Heart right ventricle (tissue), 16 donors: ENCODE measurements at regions of chrX and their contacts with region 1.

Region 1: GRCh38 chrX:150772150-150772970 is 79.2 kb downstream of the MTMR1 start:
- DNase-seq: peak; percentile 59 to 82
- ATAC-seq: peak; percentile 80 to 93 (median 88)
- H3K4me3 ChIP-seq: no peak overlapping the region
- H3K27ac ChIP-seq: no peak overlapping the region
- H3K4me1 ChIP-seq: peaks cover 0 to 8% (median 3%) of the 10 kb centered on the region in 9 donors
- H3K27me3 ChIP-seq: no peaks in the 10 kb centered on the region
- CTCF ChIP-seq: peak; percentile 60 to 81 (median 76)

Region 2: GRCh38 chrX:150898343-150899190 is 126.2 kb after region 1 on chrX and contains the start of gene CD99L2:
- intact Hi-C with region 1: loop called in 2 of 10 experiments (anchors 2 to 10 kb)
- DNase-seq: peak; percentile 87 to 91
- ATAC-seq: peak; percentile 96 to 99 (median 98)
- H3K4me3 ChIP-seq: peak within 1 kb of the TSS; percentile 38 to 73 (median 66)
- H3K27ac ChIP-seq: peak within 1 kb of the TSS; percentile 40 to 89 (median 82)
- H3K4me1 ChIP-seq: peaks cover 0 to 12% (median 0%) of the 10 kb centered on the region in 9 donors
- H3K27me3 ChIP-seq: no peaks in the 10 kb centered on the region
- CTCF ChIP-seq: no peak
- total RNA-seq, gene CD99L2: 67.2 to 122 (median 80.8) TPM

Region 3: GRCh38 chrX:150982788-150983520 is 210.6 kb after region 1 on chrX and contains the start of gene HMGB3:
- intact Hi-C with region 1: loop called in 5 of 10 experiments (anchors 5 to 10 kb)
- DNase-seq: peak; percentile 68 to 78
- ATAC-seq: peak; percentile 93 to 99 (median 98)
- H3K4me3 ChIP-seq: peak within 1 kb of the TSS in 9 of 10 donors; percentile 34 to 60 (median 55)
- H3K27ac ChIP-seq: peak within 1 kb of the TSS in 1 of 10 donors; percentile 61
- H3K4me1 ChIP-seq: peaks cover 0 to 6% (median 0%) of the 10 kb centered on the region in 9 donors
- H3K27me3 ChIP-seq: no peaks in the 10 kb centered on the region
- CTCF ChIP-seq: no peak
- total RNA-seq, gene HMGB3: 5.1 to 16.4 (median 13.8) TPM

Region 4: DNA sequence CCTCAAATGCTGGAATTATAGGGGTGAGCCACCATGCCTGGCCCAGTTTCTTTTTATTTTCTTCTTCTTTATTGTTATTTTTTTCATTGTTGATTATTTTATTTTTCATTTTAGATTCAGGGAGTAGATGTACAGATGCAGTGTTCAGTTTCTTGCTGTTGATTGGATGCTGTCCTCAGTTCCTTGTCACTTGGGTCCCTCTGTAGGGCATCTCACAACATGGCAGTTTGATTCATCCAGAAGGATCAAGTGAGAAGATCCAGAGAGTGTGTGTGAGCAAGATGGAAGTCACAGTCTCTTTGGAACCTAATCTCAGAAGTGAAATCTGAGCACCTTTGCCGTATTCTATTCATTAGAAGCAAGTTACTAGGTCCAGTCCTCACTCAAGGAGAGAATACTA is 231.7 kb after region 1 on chrX:
- intact Hi-C with region 1: loop called in 2 of 10 experiments (anchors 5 to 10 kb)
- DNase-seq: no peak
- ATAC-seq: no peak
- H3K4me3 ChIP-seq: no peak overlapping the region
- H3K27ac ChIP-seq: no peak overlapping the region
- H3K4me1 ChIP-seq: no peaks in the 10 kb centered on the region
- H3K27me3 ChIP-seq: no peaks in the 10 kb centered on the region
- CTCF ChIP-seq: peak in 5 of 9 donors; percentile 7 to 19 (median 17)

Region 5: GRCh38 chrX:151082076-151082948 is 310.0 kb after region 1 on chrX:
- intact Hi-C with region 1: loop called (anchors 1 to 5 kb)
- DNase-seq: peak; percentile 25 to 51
- ATAC-seq: peak; percentile 77 to 91 (median 89)
- H3K4me3 ChIP-seq: peak overlapping the region in 4 of 10 donors; percentile 14 to 31 (median 22)
- H3K27ac ChIP-seq: no peak overlapping the region
- H3K4me1 ChIP-seq: peaks cover 0 to 8% (median 0%) of the 10 kb centered on the region in 9 donors
- H3K27me3 ChIP-seq: peaks cover 0 to 61% (median 0%) of the 10 kb centered on the region in 7 donors
- CTCF ChIP-seq: peak; percentile 74 to 94 (median 84)